Calu3 (cell line): ENCODE measurements at regions of chr12 and their contacts with region 1.

Region 1: GRCh38 chr12:56571126-56571525 is 49.5 kb downstream of the RBMS2 start:
- DNase-seq: no peak
- H3K4me3 Mint-ChIP-seq: no peak overlapping the region
- H3K27ac Mint-ChIP-seq: no peak overlapping the region
- H3K4me1 Mint-ChIP-seq: no peaks in the 10 kb centered on the region
- H3K27me3 Mint-ChIP-seq: no peaks in the 10 kb centered on the region
- CTCF ChIP-seq: no peak

Region 2: GRCh38 chr12:56628671-56629458 is 57.7 kb after region 1 on chr12:
- CTCF ChIA-PET with region 1: interaction called, 12 read pairs
- intact Hi-C with region 1: no loop called
- DNase-seq: peak; percentile 55
- H3K4me3 Mint-ChIP-seq: peak overlapping the region; percentile 98
- H3K27ac Mint-ChIP-seq: peak overlapping the region; percentile 0
- H3K4me1 Mint-ChIP-seq: peaks cover 49% of the 10 kb centered on the region
- H3K27me3 Mint-ChIP-seq: no peaks in the 10 kb centered on the region
- CTCF ChIP-seq: no peak

Region 3: GRCh38 chr12:57404966-57405640 is 834.0 kb after region 1 on chr12:
- CTCF ChIA-PET with region 1: interaction called, 10 read pairs
- intact Hi-C with region 1: no loop called
- DNase-seq: no peak
- H3K4me3 Mint-ChIP-seq: no peak overlapping the region
- H3K27ac Mint-ChIP-seq: no peak overlapping the region
- H3K4me1 Mint-ChIP-seq: no peaks in the 10 kb centered on the region
- H3K27me3 Mint-ChIP-seq: no peaks in the 10 kb centered on the region
- CTCF ChIP-seq: no peak